ENCODE measurements at regions of chr3 and their contacts with region 1.

Region 1: GRCh38 chr3:53130179-53131061 is at the start of gene RFT1:
- DNase-seq: peak; percentile 96 to 100
- H3K4me3 ChIP-seq: peak within 1 kb of the TSS; percentile 93 to 96
- H3K27ac ChIP-seq: peak within 1 kb of the TSS; percentile 81 to 93
- H3K4me1 ChIP-seq: peaks cover 3 to 12% of the 10 kb centered on the region in 2 donors
- H3K27me3 ChIP-seq: no peaks in the 10 kb centered on the region
- CTCF ChIP-seq: peak in 1 of 3 experiments; percentile 27
- total RNA-seq, gene RFT1: 12.1 TPM

Region 2: GRCh38 chr3:51955893-51956770 is 1174.3 kb before region 1 on chr3:
- intact Hi-C with region 1: no loop called
- DNase-seq: peak in 1 of 2 donors; percentile 78
- H3K4me3 ChIP-seq: peak overlapping the region; percentile 58 to 63
- H3K27ac ChIP-seq: peak overlapping the region; percentile 81 to 85
- H3K4me1 ChIP-seq: peaks cover 2 to 6% of the 10 kb centered on the region in 2 donors
- H3K27me3 ChIP-seq: no peaks in the 10 kb centered on the region
- CTCF ChIP-seq: peak; percentile 44 to 71 (median 45)

Region 3: DNA sequence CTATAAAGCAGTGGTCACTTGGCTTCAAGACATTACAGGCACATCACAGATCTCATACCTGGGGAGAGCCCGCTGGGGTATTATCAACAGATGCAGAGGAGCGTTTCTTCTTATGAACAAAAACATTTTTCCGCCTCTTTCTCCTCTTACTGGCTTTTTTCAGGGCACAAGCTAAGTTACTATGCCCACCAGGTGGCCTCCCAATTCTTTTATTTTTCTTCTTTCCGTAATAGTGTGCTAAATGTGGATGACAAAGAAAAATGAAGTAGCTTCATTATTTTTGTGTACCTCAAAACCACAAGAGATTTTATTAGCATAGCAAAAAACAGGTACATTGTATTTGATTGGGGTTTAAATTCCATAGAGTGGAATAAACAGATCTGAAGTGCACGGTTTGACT is 222.9 kb before region 1 on chr3:
- intact Hi-C with region 1: no loop called
- DNase-seq: no peak
- H3K4me3 ChIP-seq: no peak overlapping the region
- H3K27ac ChIP-seq: no peak overlapping the region
- H3K4me1 ChIP-seq: no peaks in the 10 kb centered on the region
- H3K27me3 ChIP-seq: no peaks in the 10 kb centered on the region
- CTCF ChIP-seq: no peak

Region 4: DNA sequence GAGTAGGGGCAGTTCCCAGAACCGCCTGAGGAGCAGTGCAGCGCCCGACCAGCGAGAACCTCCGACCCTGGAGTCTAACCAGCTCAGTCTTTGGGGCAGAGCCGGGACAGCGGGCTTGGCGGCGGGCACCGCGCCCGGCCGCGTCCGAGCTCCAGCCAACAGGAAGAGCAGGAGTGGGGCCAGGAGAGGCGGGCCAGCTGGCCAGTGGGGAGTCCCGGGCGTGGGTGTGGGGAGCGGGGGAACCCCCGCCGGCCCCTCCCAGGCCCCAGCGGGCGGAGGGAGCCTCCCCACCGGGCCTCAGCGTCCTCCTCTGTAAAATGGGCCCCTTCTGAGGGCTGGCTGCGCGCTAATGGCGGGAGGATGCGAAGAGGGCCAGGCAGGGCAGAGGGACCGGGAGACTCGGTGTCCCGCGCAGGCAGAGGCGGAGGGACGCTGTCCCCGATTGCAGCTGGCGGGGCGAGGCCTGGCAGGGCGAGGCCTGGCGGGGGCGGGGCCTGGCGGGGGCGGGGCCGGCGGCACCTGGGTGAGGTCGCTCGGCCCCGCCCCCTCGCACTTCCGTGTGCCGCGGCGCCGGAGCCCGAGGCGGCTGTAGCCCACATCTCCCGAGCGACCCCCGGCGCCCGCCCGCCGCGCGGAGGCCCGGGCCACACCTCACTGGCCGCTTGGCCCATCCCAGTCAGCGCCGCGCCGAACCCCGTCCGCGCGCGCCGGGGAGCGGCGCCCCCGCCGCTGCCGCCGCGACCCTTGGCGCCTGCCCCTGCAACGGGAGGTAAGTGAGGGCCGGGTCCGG is 30.4 kb after region 1 on chr3 and contains the start of gene PRKCD:
- intact Hi-C with region 1: loop called (anchors 1 kb)
- DNase-seq: peak; percentile 59 to 95
- H3K4me3 ChIP-seq: peak within 1 kb of the TSS; percentile 88 to 90
- H3K27ac ChIP-seq: peak within 1 kb of the TSS; percentile 81 to 93
- H3K4me1 ChIP-seq: peaks cover 6 to 23% of the 10 kb centered on the region in 2 donors
- H3K27me3 ChIP-seq: no peaks in the 10 kb centered on the region
- CTCF ChIP-seq: peak; percentile 68 to 81 (median 80)
- total RNA-seq, gene PRKCD: 36.3 TPM

Measured in ascending aorta (tissue), 2 donors.